Caco-2 (cell line): ENCODE measurements at regions of chr6 and their contacts with region 1.

Region 1: DNA sequence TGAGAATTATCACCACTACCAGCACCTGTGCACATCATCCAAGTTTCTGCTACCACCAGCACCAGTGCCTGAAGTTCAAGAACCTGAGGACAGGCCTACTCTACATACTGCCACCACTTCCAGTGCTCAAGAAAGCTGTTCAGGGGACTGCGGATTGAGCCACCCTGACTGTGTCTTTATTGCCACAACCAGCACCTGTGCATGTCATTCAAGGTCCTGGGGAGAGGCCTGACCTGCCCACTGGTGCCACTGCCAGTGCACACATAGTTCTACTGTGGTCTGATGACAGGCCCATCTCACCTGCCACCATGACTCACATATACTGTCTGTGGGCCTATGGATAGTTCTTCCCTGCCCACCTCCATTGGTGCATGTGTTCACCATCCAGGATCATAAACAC is 559.4 kb downstream of the COL12A1 start:
- DNase-seq: no peak
- H3K4me3 ChIP-seq: no peak overlapping the region
- H3K4me3 Mint-ChIP-seq: no peak overlapping the region
- H3K27ac Mint-ChIP-seq: no peak overlapping the region
- H3K4me1 ChIP-seq: no peaks in the 10 kb centered on the region
- H3K4me1 Mint-ChIP-seq: no peaks in the 10 kb centered on the region
- H3K27me3 ChIP-seq: no peaks in the 10 kb centered on the region
- H3K27me3 Mint-ChIP-seq: no peaks in the 10 kb centered on the region
- CTCF ChIP-seq: no peak

Region 2: DNA sequence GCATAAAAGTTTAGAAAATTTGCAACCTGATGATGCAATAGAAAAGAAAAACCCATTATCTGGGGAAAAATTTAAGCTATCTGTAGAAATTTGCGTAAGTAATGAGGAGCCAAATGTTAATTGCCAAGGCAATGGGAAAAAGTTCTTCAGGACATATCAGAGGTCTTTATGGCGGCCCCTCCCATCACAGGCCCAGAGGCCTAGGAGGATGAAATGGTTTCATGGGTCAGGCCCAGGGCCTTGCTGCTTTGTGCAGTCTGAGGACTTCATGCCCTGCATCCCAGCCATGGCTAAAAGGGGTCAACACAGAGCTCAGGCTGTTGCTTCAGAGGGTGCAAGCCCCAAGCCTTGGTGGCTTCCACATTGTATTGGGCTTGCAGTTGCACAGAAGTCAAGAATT is 23.4 kb before region 1 on chr6:
- CTCF ChIA-PET with region 1: no interaction called
- POLR2A ChIA-PET with region 1: no interaction called
- intact Hi-C with region 1: loop called (anchors 2 kb)
- DNase-seq: no peak
- H3K4me3 ChIP-seq: no peak overlapping the region
- H3K4me3 Mint-ChIP-seq: no peak overlapping the region
- H3K27ac Mint-ChIP-seq: no peak overlapping the region
- H3K4me1 ChIP-seq: no peaks in the 10 kb centered on the region
- H3K4me1 Mint-ChIP-seq: no peaks in the 10 kb centered on the region
- H3K27me3 ChIP-seq: no peaks in the 10 kb centered on the region
- H3K27me3 Mint-ChIP-seq: no peaks in the 10 kb centered on the region
- CTCF ChIP-seq: no peak